Posterior cingulate gyrus (tissue), 11 donors: ENCODE measurements at regions of chr4 and their contacts with region 1.

Region 1: GRCh38 chr4:21790438-21791029 is 158.0 kb downstream of the KCNIP4 start:
- DNase-seq: no peak

Region 2: GRCh38 chr4:21915761-21916160 is 125.2 kb after region 1 on chr4:
- intact Hi-C with region 1: no loop called
- DNase-seq: peak in 1 of 10 donors; percentile 9

Region 3: DNA sequence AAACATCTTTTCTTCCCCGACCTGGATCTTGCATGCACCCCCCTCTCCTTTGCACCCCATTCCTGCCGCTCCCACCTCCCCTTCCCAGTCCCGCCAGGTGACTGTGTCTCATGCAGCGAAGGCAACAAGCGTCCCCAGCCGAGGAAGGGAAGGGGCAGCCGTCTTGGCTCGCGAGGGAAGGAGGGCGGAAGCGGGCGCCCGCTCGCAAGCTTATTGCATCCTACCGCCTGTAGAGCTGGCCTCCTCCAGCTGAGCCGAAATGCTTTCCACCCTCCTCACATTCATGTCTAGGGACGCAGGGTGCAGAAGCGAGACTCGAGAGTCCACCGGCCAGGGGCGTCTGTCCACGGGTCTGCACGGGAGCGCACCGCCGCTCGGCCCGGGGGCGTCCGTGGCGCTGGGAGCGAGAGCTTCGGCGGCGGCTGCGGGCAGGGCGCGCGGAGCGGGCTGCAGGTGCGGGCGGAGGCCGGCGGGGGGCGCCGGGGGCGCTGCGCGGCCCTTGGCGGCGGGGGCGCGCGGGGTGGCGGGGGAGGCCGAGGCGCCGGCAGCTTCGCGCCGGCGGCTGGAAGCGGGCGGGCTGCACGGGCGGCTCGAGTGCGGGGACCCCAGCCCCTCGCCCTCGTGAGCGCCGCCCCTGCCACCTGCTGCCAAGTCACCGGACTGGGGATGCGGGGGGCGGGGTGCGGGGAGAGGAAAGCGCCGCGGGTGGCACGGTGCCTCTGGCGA is 158.0 kb after region 1 on chr4 and contains the start of gene KCNIP4:
- intact Hi-C with region 1: loop called (anchors 5 kb)
- DNase-seq: peak in 9 of 10 donors; percentile 14 to 87 (median 37)

Region 4: GRCh38 chr4:22389240-22389870 is 598.8 kb after region 1 on chr4:
- intact Hi-C with region 1: loop called (anchors 1 kb)
- DNase-seq: peak; percentile 28 to 90 (median 50)

Region 5: DNA sequence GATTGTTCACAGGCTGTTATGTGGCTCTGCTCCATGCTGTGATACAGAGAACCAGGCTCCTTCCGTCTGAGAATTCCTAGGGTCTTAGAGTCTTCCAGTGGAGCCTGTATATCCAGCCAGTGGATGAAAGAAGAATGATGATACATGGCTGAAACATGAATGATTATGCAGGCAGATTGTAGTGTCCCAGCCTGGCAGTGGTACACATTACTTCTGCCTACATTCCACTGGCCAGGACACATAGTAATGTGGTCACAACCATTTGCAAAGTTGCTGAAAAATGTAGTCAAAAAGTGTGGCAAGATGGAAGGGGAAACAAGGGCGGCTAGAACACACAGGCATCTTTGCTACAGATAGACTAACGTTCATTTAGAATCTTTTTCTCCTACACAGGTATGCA is 897.7 kb after region 1 on chr4:
- intact Hi-C with region 1: loop called (anchors 2 kb)
- DNase-seq: no peak